Heart left ventricle (tissue), 16 donors: ENCODE measurements at regions of chr7 and their contacts with region 1.

Region 1: DNA sequence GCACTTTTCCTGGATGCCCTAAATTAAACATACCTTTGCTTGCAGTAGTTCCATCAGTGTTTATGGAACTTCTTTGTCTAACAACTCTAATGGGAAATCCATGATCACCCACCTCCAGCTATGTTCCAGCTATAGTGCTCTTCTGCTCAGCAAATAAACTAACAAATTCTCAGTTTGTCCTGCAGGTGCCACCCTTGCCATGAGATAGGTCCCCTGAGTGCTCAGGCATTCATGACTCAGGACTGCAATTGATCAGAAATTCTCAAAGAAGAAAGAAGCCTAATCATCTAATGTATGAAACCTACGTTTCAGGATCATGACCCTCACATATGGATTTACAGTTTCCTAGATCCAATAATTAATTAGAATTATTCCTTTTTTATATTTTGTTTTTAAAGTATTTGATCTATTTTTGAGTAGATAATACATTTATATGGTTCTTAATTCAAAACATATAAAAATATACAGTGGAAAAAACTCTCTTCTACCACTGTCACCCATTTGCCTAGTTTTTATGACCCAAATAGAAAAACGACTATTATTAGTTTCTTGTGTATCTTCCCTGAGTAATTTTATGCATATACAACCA is 48.7 kb upstream of the DYNC1I1 start:
- DNase-seq: peak in 2 of 5 donors; percentile 16 to 29
- ATAC-seq: peak in 3 of 4 donors; percentile 78 to 88 (median 84)
- H3K4me3 ChIP-seq: no peak overlapping the region
- H3K27ac ChIP-seq: no peak overlapping the region
- H3K4me1 ChIP-seq: no peaks in the 10 kb centered on the region
- H3K27me3 ChIP-seq: peaks cover 0 to 6% (median 0%) of the 10 kb centered on the region in 9 donors
- CTCF ChIP-seq: peak in 11 of 12 donors; percentile 33 to 59 (median 50)
- POLR2A ChIP-seq: no peak

Region 2: GRCh38 chr7:95865716-95866371 is 142.2 kb after region 1 on chr7:
- intact Hi-C with region 1: loop called (anchors 1 to 5 kb)
- DNase-seq: no peak
- ATAC-seq: no peak
- H3K4me3 ChIP-seq: no peak overlapping the region
- H3K27ac ChIP-seq: no peak overlapping the region
- H3K4me1 ChIP-seq: no peaks in the 10 kb centered on the region
- H3K27me3 ChIP-seq: no peaks in the 10 kb centered on the region
- CTCF ChIP-seq: peak in 3 of 12 donors; percentile 12 to 22 (median 14)
- POLR2A ChIP-seq: no peak

Region 3: DNA sequence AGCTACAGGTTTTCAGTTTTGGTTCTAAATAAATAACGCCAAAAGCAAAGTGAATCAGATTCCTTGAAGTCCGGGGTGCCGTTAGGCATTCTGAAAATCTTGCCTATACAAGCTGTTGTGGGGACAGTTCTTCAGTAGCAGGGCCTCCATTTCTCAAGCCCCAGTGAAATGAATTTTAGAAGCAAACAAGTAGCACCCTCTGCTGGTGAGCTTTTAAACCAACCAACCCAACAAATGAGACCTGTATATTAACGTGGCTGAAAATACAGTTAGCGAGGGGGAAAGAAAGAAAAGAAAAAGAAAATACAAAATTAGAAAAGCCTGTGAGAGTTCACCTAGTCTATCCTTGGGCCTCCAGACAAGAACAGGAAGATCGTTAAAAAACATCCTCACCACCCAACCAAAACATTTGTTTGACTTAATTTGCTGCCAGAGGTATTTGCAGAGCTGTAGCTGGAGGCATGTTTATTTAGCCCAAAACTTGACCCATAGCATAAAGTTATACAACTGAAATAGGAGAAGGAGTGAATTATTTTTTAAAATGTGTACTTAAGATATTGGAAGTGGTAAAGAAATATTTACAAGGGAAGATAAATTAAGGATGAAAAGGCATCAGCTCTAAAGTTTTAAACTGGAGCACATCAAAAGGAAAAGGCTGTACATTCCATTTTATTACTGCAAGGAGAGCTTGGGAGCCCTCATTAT is 147.5 kb after region 1 on chr7:
- intact Hi-C with region 1: loop called (anchors 1 to 5 kb)
- DNase-seq: peak in 1 of 5 donors; percentile 20
- ATAC-seq: peak in 3 of 4 donors; percentile 51 to 71 (median 69)
- H3K4me3 ChIP-seq: no peak overlapping the region
- H3K27ac ChIP-seq: no peak overlapping the region
- H3K4me1 ChIP-seq: peaks cover 0 to 14% (median 7%) of the 10 kb centered on the region in 12 donors
- H3K27me3 ChIP-seq: no peaks in the 10 kb centered on the region
- CTCF ChIP-seq: peak; percentile 36 to 73 (median 62)
- POLR2A ChIP-seq: no peak

Region 4: DNA sequence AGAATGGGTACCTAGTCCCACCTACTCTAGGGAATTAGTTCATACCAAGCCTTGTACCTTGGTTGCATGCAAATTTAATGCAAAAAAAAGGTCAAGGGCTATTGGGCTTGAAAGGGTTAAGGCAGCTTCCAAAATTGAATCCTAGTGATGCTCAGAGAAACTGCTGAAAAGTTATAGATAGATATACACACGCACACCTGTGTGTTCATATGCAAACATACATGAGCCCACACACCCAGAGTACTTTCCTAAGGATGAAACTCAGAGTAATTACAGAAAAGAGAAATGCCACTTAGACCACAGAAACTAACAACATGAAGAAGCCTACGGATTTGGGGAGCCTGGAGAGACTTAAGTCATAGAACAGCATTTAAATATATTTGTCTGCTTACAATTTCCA is 596.8 kb after region 1 on chr7:
- intact Hi-C with region 1: no loop called
- DNase-seq: no peak
- ATAC-seq: no peak
- H3K4me3 ChIP-seq: peak overlapping the region in 10 of 12 donors; percentile 71 to 100 (median 98)
- H3K27ac ChIP-seq: peak overlapping the region; percentile 90 to 99 (median 98)
- H3K4me1 ChIP-seq: peaks cover 6 to 47% (median 31%) of the 10 kb centered on the region in 12 donors
- H3K27me3 ChIP-seq: no peaks in the 10 kb centered on the region
- CTCF ChIP-seq: no peak
- POLR2A ChIP-seq: no peak